Mammary epithelial cell (primary cell): ENCODE measurements at regions of chr12 and their contacts with region 1.

Region 1: DNA sequence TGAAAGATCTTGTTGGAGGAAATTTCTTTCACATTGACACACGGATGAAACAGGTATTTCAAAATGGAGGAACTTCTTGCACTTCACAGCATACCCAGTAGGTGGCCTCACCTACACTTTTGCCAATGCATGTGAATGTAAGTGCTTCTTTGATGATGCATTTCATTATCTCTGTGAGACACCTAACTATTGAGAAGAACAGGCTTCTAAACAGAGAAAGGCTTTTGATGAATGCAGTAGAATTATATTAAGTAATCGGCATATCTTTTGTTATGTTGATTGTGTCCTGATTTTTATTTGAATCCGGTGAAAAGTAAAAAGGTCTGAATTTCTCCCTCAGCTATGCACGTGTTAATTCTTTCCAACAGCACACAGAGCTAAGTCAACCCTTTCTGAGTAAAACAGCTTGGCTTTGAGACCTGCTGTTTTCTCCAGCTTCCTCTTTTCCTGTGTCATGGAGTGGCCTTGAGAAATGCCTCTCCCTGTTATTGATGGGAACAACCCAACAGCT is 399.0 kb downstream of the NAV3 start:
- DNase-seq: peak; percentile 53
- H3K4me3 ChIP-seq: no peak overlapping the region
- H3K27ac ChIP-seq: no peak overlapping the region
- H3K4me1 ChIP-seq: no peaks in the 10 kb centered on the region
- H3K27me3 ChIP-seq: no peaks in the 10 kb centered on the region
- CTCF ChIP-seq: peak; percentile 86 to 87

Region 2: GRCh38 chr12:78406828-78407227 is 177.2 kb after region 1 on chr12:
- CTCF ChIA-PET with region 1: no interaction called
- dilution Hi-C with region 1: no loop called
- in situ Hi-C with region 1: no loop called
- intact Hi-C with region 1: loop called (anchors 10 kb)
- DNase-seq: no peak
- H3K4me3 ChIP-seq: no peak overlapping the region
- H3K27ac ChIP-seq: no peak overlapping the region
- H3K4me1 ChIP-seq: no peaks in the 10 kb centered on the region
- H3K27me3 ChIP-seq: no peaks in the 10 kb centered on the region
- CTCF ChIP-seq: no peak